ENCODE measurements at regions of chr20 and their contacts with region 1.

Region 1: DNA sequence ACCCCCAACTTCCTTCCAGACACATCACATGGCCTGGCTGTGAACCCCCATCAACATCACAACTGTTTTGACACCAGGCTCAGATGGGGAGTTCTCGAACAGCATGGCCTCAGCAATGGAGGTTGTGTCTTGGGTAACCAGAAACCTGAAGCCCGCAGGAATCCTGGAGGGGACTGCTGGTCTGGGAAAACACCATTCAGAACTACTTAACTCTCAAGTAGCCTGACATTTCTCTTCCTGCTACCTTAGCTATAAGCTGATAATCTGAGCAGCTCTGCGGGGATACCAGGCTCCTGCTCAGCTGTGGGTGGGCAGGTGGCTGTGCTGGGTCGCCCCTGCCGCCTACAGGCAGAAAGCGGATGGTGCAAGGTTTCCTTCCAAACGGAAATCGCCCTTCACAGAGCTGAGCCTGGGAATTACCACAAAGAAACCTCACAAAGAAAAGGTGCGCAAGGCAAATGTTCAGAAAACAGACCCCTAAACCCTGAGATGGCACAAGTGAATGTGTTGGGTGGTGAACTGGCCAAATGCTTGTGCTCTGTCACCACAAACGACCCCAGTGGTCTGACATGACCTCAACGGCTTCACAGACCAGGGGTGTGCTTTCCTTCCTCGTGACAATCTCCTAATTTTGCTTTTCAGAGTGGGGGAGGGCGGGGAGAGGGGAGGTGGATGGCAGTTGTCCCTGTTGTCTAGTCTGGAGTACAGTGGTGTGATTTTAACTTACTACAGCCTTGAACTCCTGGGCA is 29.5 kb downstream of the SNX5 start:
- DNase-seq: no peak
- H3K4me3 ChIP-seq: no peak overlapping the region
- H3K27ac ChIP-seq: peak overlapping the region; percentile 21
- H3K27me3 ChIP-seq: no peaks in the 10 kb centered on the region
- CTCF ChIP-seq: peak; percentile 98

Region 2: DNA sequence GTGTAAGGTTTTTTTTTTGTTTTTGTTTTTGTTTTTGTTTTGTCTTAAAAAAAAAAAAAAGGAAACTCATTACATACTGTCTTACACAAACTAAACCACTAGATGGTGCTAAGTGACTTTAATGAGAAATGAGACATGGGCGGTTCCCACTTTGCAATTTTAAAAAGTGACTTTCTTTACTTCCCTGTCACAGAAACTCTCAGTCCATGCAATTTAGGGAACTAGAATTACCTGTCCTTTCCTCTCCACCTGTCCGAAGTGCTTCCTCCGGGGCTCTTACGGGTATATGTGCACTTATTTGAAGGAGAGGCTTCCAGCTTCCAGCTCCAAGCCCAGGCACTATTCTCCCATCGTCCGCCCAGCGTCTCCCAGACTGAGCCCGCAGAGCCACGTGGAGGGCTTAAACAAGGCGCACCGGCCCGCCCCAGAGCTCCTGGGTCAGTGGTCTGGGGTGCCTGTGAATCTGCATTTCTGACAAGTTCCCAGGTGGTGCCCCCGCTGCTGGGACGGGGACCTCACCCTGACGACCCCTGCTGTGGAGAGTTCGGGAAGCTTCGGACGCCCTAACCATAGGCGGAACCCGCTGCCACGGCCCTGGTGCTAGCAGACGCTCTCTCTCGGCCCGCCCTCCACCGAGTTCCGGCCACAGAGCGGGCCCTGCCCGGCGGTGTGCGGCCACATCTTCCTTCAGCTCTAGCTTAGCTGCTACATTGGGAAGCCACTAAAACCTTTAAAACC is 434.0 kb before region 1 on chr20:
- CTCF ChIA-PET with region 1: interaction called, 17 read pairs
- POLR2A ChIA-PET with region 1: no interaction called
- DNase-seq: no peak
- H3K4me3 ChIP-seq: peak overlapping the region; percentile 58
- H3K27ac ChIP-seq: no peak overlapping the region
- H3K27me3 ChIP-seq: peaks cover 7% of the 10 kb centered on the region
- CTCF ChIP-seq: peak; percentile 64

Region 3: DNA sequence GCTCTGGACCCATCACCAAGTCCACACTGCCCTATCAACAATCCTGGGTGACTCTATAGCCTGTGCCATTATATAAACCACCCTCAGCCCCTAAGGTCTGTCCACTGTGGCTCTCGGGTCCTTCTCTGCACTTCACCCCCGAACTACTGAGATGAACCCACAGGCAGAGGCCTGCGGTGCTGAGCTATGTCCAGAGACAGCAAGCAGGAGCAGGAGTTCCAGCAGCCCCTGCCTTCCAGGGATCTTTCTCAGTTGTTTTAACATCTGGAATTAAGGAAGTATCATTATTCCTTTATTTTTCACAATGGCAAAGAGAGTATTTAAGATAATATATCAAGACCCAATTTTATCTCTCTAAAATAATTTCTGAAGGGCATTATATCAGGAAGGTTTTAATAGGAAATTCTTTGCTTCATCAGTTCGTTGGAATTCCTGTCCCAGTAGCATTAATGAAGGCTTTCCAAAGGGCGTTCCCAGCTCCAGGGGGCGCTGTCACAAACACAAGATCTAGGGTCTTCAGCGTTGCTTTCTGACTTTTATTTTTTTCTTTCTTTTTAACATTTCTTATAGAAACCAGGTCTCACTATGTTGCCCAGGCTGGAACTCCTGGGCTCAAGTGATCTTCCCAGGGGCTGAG is 284.3 kb before region 1 on chr20:
- CTCF ChIA-PET with region 1: interaction called, 15 read pairs
- POLR2A ChIA-PET with region 1: interaction called, 4 read pairs
- DNase-seq: peak; percentile 21
- H3K4me3 ChIP-seq: no peak overlapping the region
- H3K27ac ChIP-seq: peak overlapping the region; percentile 39
- H3K27me3 ChIP-seq: no peaks in the 10 kb centered on the region
- CTCF ChIP-seq: peak; percentile 71

Region 4: DNA sequence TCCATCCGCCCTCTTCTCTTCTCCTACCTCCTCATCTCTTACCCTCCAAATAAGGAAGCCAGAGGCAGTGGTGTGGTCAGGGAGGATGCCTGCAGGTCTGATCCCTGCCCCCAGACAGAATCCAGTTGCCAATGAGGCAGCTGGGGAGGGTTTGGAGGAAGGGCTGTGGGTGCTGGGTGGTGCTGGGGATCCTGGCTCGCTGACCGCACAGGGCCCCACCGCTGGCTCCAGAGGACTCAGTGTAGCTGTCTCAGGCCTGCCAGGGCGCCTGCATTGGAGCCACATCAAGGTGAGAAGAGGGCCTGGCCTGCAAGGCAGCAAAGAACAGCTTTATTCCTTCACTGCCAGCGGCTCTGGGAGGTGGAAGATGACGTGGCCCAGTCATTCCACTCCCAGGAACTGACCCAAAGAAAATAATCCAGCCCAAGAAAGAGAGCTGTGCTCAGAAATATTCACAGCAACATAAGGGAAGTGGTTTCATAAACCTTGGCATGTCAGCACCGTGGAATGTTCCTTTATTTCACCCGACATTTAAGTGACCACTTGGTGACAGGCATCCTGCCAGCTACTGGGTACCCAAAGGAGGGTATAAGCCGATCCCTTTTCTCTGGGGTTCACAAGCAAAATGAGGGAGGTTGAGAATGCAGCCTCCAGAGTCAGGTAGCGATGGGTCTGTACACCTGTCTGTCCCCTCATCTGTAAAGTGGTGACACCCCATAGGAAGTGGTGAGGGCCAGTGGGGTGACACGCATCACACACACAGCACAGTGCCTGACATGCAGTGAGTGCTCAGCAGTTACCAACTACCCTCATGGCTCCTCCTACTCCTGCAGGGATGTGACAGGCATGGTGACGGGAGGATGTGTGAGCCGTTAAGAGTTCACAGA is 95.6 kb before region 1 on chr20:
- CTCF ChIA-PET with region 1: interaction called, 4 read pairs
- POLR2A ChIA-PET with region 1: interaction called, 14 read pairs
- DNase-seq: peak; percentile 90
- H3K4me3 ChIP-seq: peak overlapping the region; percentile 35
- H3K27ac ChIP-seq: peak overlapping the region; percentile 97
- H3K27me3 ChIP-seq: no peaks in the 10 kb centered on the region
- CTCF ChIP-seq: no peak

Region 5: DNA sequence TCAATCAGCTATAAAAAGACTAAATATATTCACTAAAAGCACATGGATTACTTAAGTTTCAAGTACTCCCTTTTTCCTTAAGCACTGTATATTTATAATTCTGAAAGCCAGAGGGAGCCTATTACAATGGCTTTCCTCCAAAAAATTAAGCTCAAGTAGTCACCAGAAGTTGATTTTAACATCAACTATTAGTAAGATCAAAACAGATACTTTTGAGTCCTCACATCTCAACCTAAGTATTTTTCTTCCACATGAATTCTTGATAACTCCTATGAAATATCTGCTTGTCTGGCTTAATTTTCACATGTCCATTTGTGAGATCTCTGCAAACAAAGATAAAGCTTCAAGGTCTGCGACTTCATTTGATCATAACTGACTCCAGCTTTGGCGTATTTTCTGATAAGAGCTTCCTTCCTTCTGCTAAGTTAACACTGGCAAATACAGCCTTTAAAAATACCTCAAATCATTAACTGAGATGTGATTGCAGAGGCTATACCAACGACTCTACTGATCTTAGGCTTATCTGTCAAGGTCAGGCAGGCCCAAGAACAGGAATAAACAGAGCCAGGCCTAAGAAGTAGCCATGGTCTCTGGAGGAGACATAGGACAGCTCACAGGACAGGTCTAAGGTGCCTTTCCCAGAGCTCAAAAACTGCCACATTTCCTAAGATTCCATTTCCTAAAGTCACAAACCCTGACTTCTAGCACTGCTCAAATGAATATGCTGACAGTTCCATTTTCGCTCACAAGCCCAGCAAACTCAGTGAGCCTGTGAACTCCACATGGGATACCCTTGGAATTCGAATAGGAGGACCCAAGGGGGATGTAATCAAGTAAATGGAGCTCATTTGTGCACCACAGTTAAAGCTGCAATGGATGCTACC is 19.6 kb after region 1 on chr20:
- CTCF ChIA-PET with region 1: interaction called, 23 read pairs
- POLR2A ChIA-PET with region 1: interaction called, 16 read pairs
- DNase-seq: no peak
- H3K4me3 ChIP-seq: no peak overlapping the region
- H3K27ac ChIP-seq: peak overlapping the region; percentile 71
- H3K27me3 ChIP-seq: no peaks in the 10 kb centered on the region
- CTCF ChIP-seq: peak; percentile 38

Region 6: GRCh38 chr20:18056174-18057100 is 117.4 kb after region 1 on chr20:
- CTCF ChIA-PET with region 1: no interaction called
- POLR2A ChIA-PET with region 1: no interaction called
- DNase-seq: no peak
- H3K4me3 ChIP-seq: no peak overlapping the region
- H3K27ac ChIP-seq: no peak overlapping the region
- H3K27me3 ChIP-seq: peaks cover 66% of the 10 kb centered on the region
- CTCF ChIP-seq: no peak

Region 7: DNA sequence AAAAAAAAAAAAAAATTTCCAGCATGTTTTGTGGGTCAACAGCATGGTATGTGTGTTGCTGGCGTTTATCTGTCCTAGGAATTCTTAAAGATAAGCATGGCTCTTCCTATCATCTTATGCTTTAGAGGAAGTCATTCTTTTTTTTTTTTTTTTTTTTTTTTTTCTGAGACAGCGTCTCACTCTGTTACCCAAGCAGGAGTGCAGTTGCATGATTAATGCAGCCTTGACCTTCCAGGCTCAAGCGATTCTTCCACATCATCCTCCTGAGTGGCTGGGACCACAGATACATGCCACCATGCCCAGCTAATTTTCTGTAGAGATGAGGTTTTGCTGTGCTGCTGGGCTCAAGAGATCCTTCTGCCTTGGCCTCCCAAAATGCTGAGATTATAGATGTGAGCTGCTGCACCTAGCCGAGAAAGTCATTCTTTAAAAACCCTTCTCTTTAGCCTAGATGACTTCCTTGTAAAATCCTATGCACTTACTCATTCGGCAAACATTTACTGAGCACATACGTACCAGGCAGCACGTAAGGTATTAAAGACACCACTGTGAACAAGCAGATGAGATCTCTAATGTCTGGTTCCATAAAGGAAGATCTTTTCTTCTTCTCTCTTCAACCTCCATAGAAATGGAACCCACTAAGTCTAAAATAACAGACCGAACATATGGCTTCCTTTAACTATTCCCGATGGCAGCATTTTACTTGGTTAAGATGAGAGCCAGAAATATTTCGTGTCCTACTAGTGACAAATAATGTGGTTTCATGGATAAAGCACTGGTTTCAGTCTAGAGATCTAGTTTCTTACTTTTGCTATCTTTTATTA is 1941.4 kb after region 1 on chr20:
- CTCF ChIA-PET with region 1: no interaction called
- POLR2A ChIA-PET with region 1: interaction called, 10 read pairs
- DNase-seq: peak; percentile 43
- H3K4me3 ChIP-seq: 0 out of 2 replicates have a peak overlapping the region, but pooled peaks have one; percentile 25
- H3K27ac ChIP-seq: peak overlapping the region; percentile 89
- H3K27me3 ChIP-seq: no peaks in the 10 kb centered on the region
- CTCF ChIP-seq: no peak

Measured in AG04450 (cell line).